ENCODE measurements at regions of chr11 and their contacts with region 1.

Region 1: DNA sequence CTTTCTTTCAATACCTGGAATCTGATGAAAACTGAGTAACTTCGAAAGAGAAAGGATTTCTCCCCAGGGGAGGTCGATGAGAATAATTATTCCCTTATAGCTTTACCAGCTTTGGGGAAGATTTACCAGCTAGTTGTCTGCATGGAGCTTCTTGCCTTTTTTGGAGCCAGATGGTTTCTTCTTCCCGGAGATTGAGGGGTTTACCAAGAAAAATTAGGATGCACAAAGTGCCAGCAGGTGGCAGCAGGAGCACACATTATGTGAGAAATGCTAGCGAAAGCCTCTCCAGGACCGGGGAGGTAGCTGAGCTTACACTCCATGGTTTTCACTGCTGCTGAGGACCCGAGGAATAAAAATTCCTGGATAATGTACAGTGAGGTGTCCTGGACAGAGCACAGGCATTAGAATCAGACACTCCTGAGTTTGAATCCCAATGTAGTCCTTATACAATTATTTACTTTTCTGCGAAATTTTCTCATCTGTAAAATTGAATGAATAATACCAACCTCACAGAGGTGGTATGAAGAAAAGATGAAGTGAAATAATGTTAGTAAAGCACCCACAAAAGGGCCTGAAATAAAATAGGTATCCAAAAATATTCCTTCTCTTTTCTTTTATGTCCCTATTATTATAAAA is 46.0 kb upstream of the PARVA start:
- DNase-seq: peak; percentile 71
- H3K4me3 ChIP-seq: no peak overlapping the region
- H3K27ac ChIP-seq: no peak overlapping the region
- H3K27me3 ChIP-seq: no peaks in the 10 kb centered on the region
- CTCF ChIP-seq: peak; percentile 83

Region 2: GRCh38 chr11:12295943-12296342 is 35.4 kb before region 1 on chr11:
- CTCF ChIA-PET with region 1: interaction called, 56 read pairs
- POLR2A ChIA-PET with region 1: interaction called, 3 read pairs
- DNase-seq: no peak
- H3K4me3 ChIP-seq: no peak overlapping the region
- H3K27ac ChIP-seq: no peak overlapping the region
- H3K27me3 ChIP-seq: no peaks in the 10 kb centered on the region
- CTCF ChIP-seq: no peak

Region 3: DNA sequence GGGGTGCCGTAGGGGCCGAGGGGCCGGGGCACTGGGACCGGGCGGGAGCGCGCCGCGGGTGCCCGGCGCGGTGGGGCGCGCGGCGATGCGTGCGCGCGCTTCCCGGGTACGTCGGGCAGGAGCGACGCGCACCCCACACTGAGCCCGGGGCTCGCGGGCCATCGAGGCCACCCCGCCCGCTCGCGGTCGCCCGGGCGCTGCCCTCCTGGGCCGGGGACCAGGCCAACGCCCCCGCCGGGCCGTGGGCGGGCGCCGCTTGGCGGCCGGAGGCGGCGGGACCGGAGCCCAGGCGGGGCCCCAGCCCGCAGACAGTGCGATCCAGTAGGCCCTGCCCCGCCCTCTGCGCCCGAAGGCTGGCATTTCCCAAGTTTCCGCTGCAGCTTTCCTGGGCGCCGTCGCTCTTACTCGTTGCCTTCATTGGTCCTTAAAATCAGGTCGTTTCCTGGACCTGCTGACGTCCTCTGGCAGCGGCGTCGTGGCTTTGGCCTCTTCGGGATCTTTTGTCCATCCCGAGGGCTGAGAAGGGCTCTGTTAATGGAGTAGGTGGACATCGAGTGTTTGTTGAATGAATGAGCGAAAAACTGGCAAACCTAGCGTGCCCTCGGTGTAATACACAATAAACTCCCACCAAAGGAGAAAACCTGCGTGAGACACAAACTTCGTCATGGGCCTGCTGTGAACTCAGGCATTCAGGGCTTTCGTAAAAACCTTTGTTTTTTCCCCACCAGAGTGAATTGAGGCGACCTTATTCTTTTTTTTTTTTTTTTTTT is 46.7 kb after region 1 on chr11:
- CTCF ChIA-PET with region 1: interaction called, 13 read pairs
- POLR2A ChIA-PET with region 1: interaction called, 6 read pairs
- DNase-seq: no peak
- H3K4me3 ChIP-seq: peak overlapping the region; percentile 89
- H3K27ac ChIP-seq: peak overlapping the region; percentile 98
- H3K27me3 ChIP-seq: no peaks in the 10 kb centered on the region
- CTCF ChIP-seq: 0 out of 2 replicates have a peak, but pooled peaks have one; percentile 5

Region 4: GRCh38 chr11:12433571-12434324 is 102.4 kb after region 1 on chr11:
- CTCF ChIA-PET with region 1: interaction called, 12 read pairs
- POLR2A ChIA-PET with region 1: no interaction called
- DNase-seq: peak; percentile 95
- H3K4me3 ChIP-seq: no peak overlapping the region
- H3K27ac ChIP-seq: peak overlapping the region; percentile 99
- H3K27me3 ChIP-seq: no peaks in the 10 kb centered on the region
- CTCF ChIP-seq: no peak

Region 5: DNA sequence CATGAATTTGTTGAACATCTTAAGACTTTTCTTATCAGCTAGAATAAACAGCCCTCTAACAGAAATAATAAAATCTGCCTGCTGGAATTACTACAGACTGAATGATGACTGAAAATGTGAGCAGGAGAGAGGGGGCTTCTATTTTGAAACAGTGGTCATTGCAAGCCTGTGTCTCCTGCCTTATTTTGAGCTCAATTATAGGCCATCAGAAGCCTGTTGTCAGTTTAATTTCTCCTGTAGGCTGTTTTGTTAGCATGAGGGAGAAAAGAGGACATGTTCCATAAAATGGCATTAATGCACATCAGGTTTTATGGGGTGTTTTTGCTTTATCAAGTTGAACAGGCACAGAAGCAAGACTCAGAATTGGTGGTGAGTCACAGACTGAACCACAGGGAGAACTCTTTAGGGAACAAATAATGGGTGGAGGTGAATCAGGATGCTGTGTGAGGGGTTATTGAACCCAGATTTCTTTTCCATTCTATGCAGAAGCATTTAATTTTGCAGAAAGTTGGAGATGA is 175.1 kb after region 1 on chr11:
- CTCF ChIA-PET with region 1: interaction called, 14 read pairs
- POLR2A ChIA-PET with region 1: no interaction called
- DNase-seq: no peak
- H3K4me3 ChIP-seq: no peak overlapping the region
- H3K27ac ChIP-seq: no peak overlapping the region
- H3K27me3 ChIP-seq: no peaks in the 10 kb centered on the region
- CTCF ChIP-seq: no peak

Region 6: DNA sequence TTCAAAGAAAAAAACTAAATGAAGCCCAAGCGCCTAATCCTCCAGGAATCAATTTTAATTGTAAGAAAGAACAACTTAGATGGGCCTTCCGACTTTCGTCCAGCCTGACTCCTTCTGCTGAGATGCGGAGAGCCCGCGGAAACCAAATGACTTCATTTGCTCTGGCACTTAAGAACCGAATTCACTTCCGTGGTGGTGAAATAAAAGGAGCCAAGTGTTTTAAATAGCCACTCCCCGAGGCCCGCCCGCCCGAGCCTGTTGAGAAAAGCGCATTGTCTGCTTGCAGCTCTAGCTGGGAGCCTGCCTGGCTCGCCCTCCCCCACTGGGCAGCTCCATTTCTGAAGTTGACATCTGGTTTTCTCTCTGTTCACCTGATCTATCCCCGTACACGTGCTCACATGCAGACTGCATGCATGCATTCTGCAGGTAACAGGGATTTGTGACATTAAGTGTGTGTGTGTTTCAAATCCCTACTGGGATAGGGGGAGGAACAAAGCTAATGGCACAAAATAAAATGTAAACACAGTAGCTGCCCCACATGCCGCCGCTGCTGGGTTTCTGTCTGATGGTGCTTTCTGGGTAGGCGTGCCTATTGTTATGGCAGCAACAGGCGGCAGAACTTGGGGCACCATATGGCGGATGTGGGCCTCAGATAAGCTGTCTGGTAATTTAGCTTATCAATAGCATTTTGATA is 349.0 kb after region 1 on chr11:
- CTCF ChIA-PET with region 1: interaction called, 42 read pairs
- POLR2A ChIA-PET with region 1: interaction called, 6 read pairs
- DNase-seq: peak; percentile 65
- H3K4me3 ChIP-seq: peak overlapping the region; percentile 23
- H3K27ac ChIP-seq: peak overlapping the region; percentile 31
- H3K27me3 ChIP-seq: no peaks in the 10 kb centered on the region
- CTCF ChIP-seq: no peak

Region 7: DNA sequence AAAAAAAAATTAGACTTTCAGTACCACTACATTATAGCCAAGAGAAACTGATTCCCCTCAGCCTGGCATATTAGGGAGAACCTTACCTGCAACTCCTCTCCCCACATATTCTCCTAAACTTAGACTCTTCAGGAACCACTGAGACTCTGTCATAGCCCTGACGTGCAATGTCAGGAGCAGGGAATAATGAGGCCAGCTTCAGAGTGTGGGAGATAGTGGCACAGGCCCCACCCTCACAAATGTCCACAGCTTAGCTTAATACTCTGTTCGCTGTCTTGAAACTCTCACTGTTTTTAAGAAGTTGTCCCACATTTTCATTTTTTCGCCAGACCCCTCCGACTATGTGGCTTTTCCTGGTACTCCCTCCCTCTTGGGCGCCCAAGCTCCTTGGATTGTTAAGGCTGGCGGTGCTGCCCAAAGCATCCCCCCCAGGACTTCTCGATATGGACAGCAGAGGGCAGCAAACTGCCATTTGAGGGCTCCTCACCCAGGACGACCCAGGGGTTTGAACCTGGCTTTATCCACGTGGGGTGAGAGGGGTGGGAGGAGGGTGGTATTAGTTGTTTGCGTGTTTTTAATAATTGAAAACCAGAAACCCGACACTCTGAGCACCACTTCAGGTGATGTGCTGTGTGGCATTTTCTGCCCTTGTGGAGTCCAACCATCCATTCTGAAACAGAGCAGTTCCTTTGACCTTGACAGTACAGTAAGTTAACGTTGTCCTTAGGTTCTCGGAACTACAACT is 632.6 kb after region 1 on chr11:
- CTCF ChIA-PET with region 1: interaction called, 47 read pairs
- POLR2A ChIA-PET with region 1: interaction called, 3 read pairs
- DNase-seq: peak; percentile 11
- H3K4me3 ChIP-seq: no peak overlapping the region
- H3K27ac ChIP-seq: no peak overlapping the region
- H3K27me3 ChIP-seq: peaks cover 6% of the 10 kb centered on the region
- CTCF ChIP-seq: peak; percentile 89

Region 8: GRCh38 chr11:13126430-13126829 is 795.1 kb after region 1 on chr11:
- CTCF ChIA-PET with region 1: no interaction called
- POLR2A ChIA-PET with region 1: no interaction called
- DNase-seq: peak; percentile 87
- H3K4me3 ChIP-seq: no peak overlapping the region
- H3K27ac ChIP-seq: peak overlapping the region; percentile 55
- H3K27me3 ChIP-seq: no peaks in the 10 kb centered on the region
- CTCF ChIP-seq: no peak